Activated CD8-positive, alpha-beta T cell treated with anti-CD3 and anti-CD28 coated beads for 36 hours (primary cell): ENCODE measurements at regions of chr19 and their contacts with region 1.

Region 1: GRCh38 chr19:49148784-49149651 is 6.2 kb downstream of the HRC start:
- DNase-seq: peak; percentile 95
- ATAC-seq: peak; percentile 68
- H3K4me3 Mint-ChIP-seq: peak overlapping the region; percentile 62
- H3K27ac Mint-ChIP-seq: no peak overlapping the region
- H3K4me1 Mint-ChIP-seq: peaks cover 27% of the 10 kb centered on the region
- H3K27me3 Mint-ChIP-seq: peaks cover 63% of the 10 kb centered on the region
- CTCF ChIP-seq: no peak

Region 2: DNA sequence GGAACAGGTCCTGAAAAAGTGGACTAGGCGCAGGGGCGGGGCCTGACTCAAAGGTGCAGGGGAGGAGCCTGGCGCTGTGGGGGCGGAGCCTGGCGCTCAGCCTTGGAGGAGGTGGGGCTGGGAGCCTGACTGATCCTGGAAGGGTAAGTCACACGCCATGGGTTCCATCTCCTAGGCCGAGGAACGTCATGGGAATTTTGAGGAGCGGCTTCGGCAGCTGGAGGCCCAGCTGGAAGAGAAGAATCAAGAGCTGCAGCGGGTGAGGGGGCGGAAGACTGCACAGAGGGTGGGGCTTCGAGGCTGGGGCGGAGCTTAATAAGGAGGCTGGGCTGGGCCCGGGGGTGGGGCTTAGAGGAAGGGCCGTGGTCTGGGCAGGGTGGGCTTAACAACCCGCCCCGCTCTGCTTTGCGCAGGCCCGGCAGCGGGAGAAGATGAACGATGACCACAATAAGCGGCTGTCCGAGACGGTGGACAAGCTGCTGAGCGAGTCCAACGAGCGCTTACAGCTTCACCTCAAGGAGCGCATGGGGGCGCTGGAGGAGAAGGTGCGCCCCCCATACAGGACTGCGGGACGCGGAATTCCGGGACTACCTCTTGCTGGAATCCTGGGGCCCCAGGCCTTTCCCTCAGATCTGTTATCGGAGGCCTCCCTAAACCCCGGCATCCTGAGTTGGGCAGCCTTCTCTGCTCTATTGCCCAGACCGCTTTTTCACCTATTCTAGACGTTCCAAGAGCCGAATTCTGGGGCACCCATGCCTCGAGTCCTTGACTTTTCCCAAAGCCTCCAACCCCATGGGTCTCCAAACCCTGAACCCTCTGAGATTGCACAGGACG is 15.2 kb before region 1 on chr19:
- CTCF ChIA-PET with region 1: interaction called, 35 read pairs
- POLR2A ChIA-PET with region 1: interaction called, 7 read pairs
- intact Hi-C with region 1: no loop called
- DNase-seq: peak; percentile 73
- ATAC-seq: peak; percentile 78
- H3K4me3 Mint-ChIP-seq: peak overlapping the region; percentile 49
- H3K27ac Mint-ChIP-seq: no peak overlapping the region
- H3K4me1 Mint-ChIP-seq: peaks cover 11% of the 10 kb centered on the region
- H3K27me3 Mint-ChIP-seq: peaks cover 4% of the 10 kb centered on the region
- CTCF ChIP-seq: no peak

Region 3: GRCh38 chr19:49167857-49168409 is 18.9 kb after region 1 on chr19:
- CTCF ChIA-PET with region 1: no interaction called
- POLR2A ChIA-PET with region 1: no interaction called
- intact Hi-C with region 1: no loop called
- DNase-seq: no peak
- ATAC-seq: no peak
- H3K4me3 Mint-ChIP-seq: no peak overlapping the region
- H3K27ac Mint-ChIP-seq: no peak overlapping the region
- H3K4me1 Mint-ChIP-seq: no peaks in the 10 kb centered on the region
- H3K27me3 Mint-ChIP-seq: peaks cover 5% of the 10 kb centered on the region
- CTCF ChIP-seq: no peak